B cell (primary cell): ENCODE measurements at regions of chr10 and their contacts with region 1.

Region 1: GRCh38 chr10:33330543-33331378 is 3.7 kb downstream of the NRP1 start:
- DNase-seq: peak; percentile 56
- ATAC-seq: no peak
- H3K4me3 ChIP-seq: no peak overlapping the region
- H3K4me3 Mint-ChIP-seq: no peak overlapping the region
- H3K27ac ChIP-seq: no peak overlapping the region
- H3K27ac Mint-ChIP-seq: no peak overlapping the region
- H3K4me1 ChIP-seq: peaks cover 14 to 20% of the 10 kb centered on the region in 2 donors
- H3K4me1 Mint-ChIP-seq: peaks cover 12% of the 10 kb centered on the region
- H3K27me3 ChIP-seq: peaks cover 0 to 36% (median 27%) of the 10 kb centered on the region in 4 experiments
- H3K27me3 Mint-ChIP-seq: peaks cover 40% of the 10 kb centered on the region
- CTCF ChIP-seq: peak; percentile 95

Region 2: GRCh38 chr10:33341637-33342036 is 10.9 kb after region 1 on chr10:
- CTCF ChIA-PET with region 1: interaction called, 15 read pairs
- POLR2A ChIA-PET with region 1: no interaction called
- intact Hi-C with region 1: no loop called
- DNase-seq: no peak
- ATAC-seq: no peak
- H3K4me3 ChIP-seq: no peak overlapping the region
- H3K4me3 Mint-ChIP-seq: no peak overlapping the region
- H3K27ac ChIP-seq: no peak overlapping the region
- H3K27ac Mint-ChIP-seq: no peak overlapping the region
- H3K4me1 ChIP-seq: no peaks in the 10 kb centered on the region
- H3K4me1 Mint-ChIP-seq: peaks cover 7% of the 10 kb centered on the region
- H3K27me3 ChIP-seq: peaks cover 0 to 11% (median 0%) of the 10 kb centered on the region in 4 experiments
- H3K27me3 Mint-ChIP-seq: peaks cover 46% of the 10 kb centered on the region
- CTCF ChIP-seq: no peak

Region 3: GRCh38 chr10:33584569-33584968 is 253.8 kb after region 1 on chr10:
- CTCF ChIA-PET with region 1: no interaction called
- POLR2A ChIA-PET with region 1: no interaction called
- intact Hi-C with region 1: no loop called
- DNase-seq: no peak
- ATAC-seq: no peak
- H3K4me3 ChIP-seq: no peak overlapping the region
- H3K4me3 Mint-ChIP-seq: no peak overlapping the region
- H3K27ac ChIP-seq: no peak overlapping the region
- H3K27ac Mint-ChIP-seq: no peak overlapping the region
- H3K4me1 ChIP-seq: no peaks in the 10 kb centered on the region
- H3K4me1 Mint-ChIP-seq: no peaks in the 10 kb centered on the region
- H3K27me3 ChIP-seq: no peaks in the 10 kb centered on the region
- H3K27me3 Mint-ChIP-seq: no peaks in the 10 kb centered on the region
- CTCF ChIP-seq: no peak